Cardiac septum (tissue), 1 donor: ENCODE measurements at regions of chr1 and their contacts with region 1.

Region 1: GRCh38 chr1:205658943-205659581 is 21.2 kb downstream of the SLC45A3 start:
- DNase-seq: peak; percentile 88

Region 2: GRCh38 chr1:205485338-205486228 is 173.5 kb before region 1 on chr1:
- intact Hi-C with region 1: loop called (anchors 5 kb)
- DNase-seq: no peak

Region 3: GRCh38 chr1:205528887-205529825 is 129.9 kb before region 1 on chr1:
- intact Hi-C with region 1: loop called (anchors 2 kb)
- DNase-seq: peak; percentile 89

Region 4: DNA sequence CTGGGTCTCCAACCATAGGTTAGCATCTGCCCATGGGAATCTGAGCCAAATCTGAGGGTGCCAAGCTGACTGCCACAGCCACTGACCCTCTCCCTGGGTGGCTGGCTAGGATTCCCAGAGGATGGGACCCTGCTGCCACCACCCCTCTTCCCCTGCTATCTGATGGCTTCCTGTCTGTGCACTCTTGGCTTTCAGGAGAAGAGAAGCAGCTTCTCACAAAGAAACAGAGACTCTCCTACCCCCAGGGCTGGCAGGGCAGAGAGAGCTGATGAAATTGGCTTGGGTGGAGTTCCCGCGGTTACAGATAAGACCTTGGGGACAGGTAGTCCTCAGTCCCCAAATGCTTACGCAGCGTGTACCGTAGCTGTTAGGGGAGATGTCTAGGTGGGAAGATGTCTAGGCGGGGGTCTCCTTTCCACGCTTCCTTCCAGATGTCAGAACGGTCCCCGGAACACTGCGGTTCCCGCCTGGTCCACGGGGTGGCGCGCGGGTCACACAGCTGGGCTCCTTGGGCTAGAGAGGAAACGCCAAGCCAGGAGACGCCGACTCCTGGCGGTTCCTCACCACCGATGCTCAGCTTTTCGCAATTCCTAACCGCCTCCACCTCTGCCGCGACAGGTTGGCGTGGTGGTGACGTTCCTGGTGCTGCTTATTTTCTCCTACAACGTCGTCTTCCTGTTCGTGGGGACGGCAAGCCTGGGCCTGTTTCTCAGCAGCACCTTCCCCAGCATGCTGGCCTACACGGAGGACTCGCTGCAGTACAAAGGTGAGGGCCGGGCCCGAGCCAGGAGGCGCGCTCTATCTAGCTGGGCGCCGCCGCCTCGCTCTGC is 67.3 kb before region 1 on chr1:
- intact Hi-C with region 1: loop called (anchors 1 kb)
- DNase-seq: peak; percentile 93

Region 5: GRCh38 chr1:205711104-205712020 is 52.3 kb after region 1 on chr1:
- intact Hi-C with region 1: loop called (anchors 2 kb)
- DNase-seq: no peak

Region 6: GRCh38 chr1:205775015-205775716 is 116.1 kb after region 1 on chr1 and contains the start of gene RAB29:
- intact Hi-C with region 1: no loop called
- DNase-seq: peak; percentile 94
- total RNA-seq, gene RAB29: 21.3 TPM

Region 7: GRCh38 chr1:205913451-205914155 is 254.5 kb after region 1 on chr1:
- intact Hi-C with region 1: loop called (anchors 5 kb)
- DNase-seq: no peak

Region 8: GRCh38 chr1:205977402-205978014 is 318.4 kb after region 1 on chr1:
- intact Hi-C with region 1: loop called (anchors 2 kb)
- DNase-seq: peak; percentile 89